Right ventricle myocardium superior (tissue), 1 donor: ENCODE measurements at regions of chr9 and their contacts with region 1.

Region 1: GRCh38 chr9:125739436-125739835 is 7.7 kb upstream of the PBX3 start:
- DNase-seq: no peak
- ATAC-seq: no peak

Region 2: DNA sequence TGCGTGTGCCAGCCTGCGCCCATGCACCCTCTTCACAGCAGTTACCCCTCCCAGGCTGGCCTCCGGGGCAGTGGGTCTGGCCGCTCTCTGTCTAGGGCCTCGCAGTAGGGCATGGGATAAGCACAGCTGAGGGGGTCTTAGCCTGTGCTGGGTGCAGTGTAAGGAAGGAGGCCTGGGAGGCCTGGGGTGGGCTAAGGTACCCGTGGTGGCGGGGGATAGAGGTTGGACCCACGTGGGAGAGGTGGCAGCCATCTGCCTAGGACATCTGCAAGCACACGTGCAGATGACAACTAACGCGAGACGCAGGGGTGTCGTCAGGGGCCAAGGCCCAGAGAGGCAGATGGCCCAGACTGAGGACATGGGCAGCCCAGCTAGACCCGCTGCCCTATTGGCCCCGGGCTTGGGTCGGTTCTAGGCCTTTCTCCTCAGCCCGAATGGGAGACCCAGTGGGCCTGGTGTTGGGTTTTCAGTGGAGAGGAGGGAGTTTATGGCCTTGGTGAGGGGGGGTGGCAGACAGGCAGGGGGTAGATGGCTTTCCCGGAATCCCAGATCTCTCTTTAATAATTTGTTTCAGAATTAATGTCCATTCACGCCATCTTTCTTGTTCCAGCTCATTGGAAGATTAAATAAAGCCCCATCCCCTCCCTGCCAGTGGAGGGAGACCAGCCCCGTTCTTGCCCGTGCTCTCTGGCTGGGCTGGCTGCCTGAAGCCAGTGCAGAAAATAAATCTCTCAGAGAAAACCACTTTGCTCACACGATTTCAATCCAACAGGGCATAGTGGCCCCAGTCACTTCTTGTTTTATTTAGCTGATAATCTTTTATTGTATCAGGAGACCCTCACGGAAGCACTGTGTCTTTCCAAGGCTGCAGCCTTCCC is 323.6 kb before region 1 on chr9:
- intact Hi-C with region 1: loop called (anchors 5 kb)
- DNase-seq: peak; percentile 26
- ATAC-seq: peak; percentile 52